ENCODE measurements at regions of chrX and their contacts with region 1.

Region 1: DNA sequence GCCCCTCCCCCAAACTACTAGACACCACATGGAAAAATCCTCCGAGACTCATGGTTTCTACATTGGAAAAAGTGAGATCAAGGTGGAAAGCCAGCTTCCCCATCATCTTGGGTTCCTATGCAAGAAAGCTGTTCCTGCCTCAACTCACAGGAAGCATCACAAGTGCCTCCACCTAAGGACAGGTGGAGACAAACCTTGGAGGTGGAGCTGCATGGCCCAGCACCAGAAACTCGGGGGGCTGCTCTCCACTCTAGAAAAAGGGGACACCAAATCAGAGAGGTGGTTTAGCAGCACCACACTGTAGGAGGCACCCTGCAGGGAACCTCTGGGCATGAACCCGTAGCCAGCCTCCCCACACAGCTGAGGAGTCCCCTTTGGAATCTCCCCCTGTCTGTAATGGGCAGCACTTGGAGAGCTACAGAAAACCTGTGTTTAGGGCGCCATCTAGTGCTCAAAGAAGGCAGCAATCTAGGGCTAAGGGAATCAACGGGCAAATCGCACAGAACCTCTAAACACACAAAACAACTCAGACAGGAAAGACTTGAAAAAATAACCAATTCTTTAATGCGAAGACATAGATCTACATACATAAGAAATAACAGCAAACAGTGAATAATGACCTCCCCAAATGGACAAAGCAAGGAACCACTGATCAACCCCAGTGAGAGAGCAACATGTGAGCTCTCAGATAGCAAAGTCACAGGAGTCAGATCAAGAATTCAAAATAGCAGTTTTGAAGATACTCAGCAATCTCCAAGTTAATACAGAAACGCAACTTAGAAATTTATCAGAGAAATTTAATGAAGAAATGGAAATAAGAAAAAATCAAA is 37.0 kb upstream of the ZBTB33 start:
- DNase-seq: peak; percentile 10 to 72 (median 55)
- ATAC-seq: peak; percentile 49
- H3K4me3 ChIP-seq: no peak overlapping the region
- H3K4me3 Mint-ChIP-seq: no peak overlapping the region
- H3K27ac ChIP-seq: no peak overlapping the region
- H3K27ac Mint-ChIP-seq: no peak overlapping the region
- H3K4me1 ChIP-seq: peaks cover 4% of the 10 kb centered on the region
- H3K4me1 Mint-ChIP-seq: peaks cover 9% of the 10 kb centered on the region
- H3K27me3 ChIP-seq: no peaks in the 10 kb centered on the region
- H3K27me3 Mint-ChIP-seq: no peaks in the 10 kb centered on the region
- CTCF ChIP-seq: peak; percentile 50

Region 2: GRCh38 chrX:120224388-120224787 is 10.7 kb after region 1 on chrX:
- CTCF ChIA-PET with region 1: interaction called, 11 read pairs
- POLR2A ChIA-PET with region 1: no interaction called
- intact Hi-C with region 1: no loop called
- DNase-seq: no peak
- ATAC-seq: no peak
- H3K4me3 ChIP-seq: no peak overlapping the region
- H3K4me3 Mint-ChIP-seq: no peak overlapping the region
- H3K27ac ChIP-seq: no peak overlapping the region
- H3K27ac Mint-ChIP-seq: no peak overlapping the region
- H3K4me1 ChIP-seq: no peaks in the 10 kb centered on the region
- H3K4me1 Mint-ChIP-seq: no peaks in the 10 kb centered on the region
- H3K27me3 ChIP-seq: no peaks in the 10 kb centered on the region
- H3K27me3 Mint-ChIP-seq: no peaks in the 10 kb centered on the region
- CTCF ChIP-seq: no peak

Region 3: DNA sequence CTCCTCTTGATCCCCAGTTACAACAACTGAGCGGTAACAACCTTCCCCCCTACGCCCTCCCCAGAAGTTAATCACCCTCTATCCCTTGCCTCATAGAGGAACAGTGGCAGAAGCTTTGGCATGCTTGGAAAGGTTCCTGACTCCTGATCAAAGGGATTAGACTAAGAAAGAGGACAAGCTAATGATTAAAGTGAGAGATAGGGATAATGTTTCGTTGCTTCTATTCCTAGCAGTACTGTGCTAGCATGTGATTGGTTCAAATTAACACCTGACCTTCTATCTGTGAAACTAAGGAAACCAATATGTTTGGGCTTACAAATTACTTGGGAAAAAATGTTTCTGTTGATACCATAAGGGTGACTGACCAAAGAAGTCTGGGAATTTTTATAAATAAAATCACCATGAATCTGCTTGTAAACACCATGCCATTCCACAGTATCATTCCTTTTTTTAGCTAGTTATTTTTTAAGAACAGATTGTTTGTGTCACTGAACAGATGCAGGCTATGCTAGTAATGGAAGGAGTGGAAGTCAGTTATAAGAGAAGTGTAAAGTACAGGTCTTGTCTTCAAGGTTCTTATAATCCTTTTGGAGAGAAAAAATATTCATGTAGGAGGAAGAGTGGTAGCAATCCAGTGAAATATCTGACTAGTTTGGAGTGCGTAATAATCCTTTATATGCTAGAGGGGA is 136.9 kb after region 1 on chrX:
- CTCF ChIA-PET with region 1: no interaction called
- POLR2A ChIA-PET with region 1: no interaction called
- intact Hi-C with region 1: no loop called
- DNase-seq: no peak
- ATAC-seq: no peak
- H3K4me3 ChIP-seq: no peak overlapping the region
- H3K4me3 Mint-ChIP-seq: no peak overlapping the region
- H3K27ac ChIP-seq: no peak overlapping the region
- H3K27ac Mint-ChIP-seq: no peak overlapping the region
- H3K4me1 ChIP-seq: no peaks in the 10 kb centered on the region
- H3K4me1 Mint-ChIP-seq: no peaks in the 10 kb centered on the region
- H3K27me3 ChIP-seq: no peaks in the 10 kb centered on the region
- H3K27me3 Mint-ChIP-seq: no peaks in the 10 kb centered on the region
- CTCF ChIP-seq: no peak

Measured in CD8-positive, alpha-beta T cell (primary cell).